Posterior vena cava (tissue), 2 donors: ENCODE measurements at regions of chr19 and their contacts with region 1.

Region 1: DNA sequence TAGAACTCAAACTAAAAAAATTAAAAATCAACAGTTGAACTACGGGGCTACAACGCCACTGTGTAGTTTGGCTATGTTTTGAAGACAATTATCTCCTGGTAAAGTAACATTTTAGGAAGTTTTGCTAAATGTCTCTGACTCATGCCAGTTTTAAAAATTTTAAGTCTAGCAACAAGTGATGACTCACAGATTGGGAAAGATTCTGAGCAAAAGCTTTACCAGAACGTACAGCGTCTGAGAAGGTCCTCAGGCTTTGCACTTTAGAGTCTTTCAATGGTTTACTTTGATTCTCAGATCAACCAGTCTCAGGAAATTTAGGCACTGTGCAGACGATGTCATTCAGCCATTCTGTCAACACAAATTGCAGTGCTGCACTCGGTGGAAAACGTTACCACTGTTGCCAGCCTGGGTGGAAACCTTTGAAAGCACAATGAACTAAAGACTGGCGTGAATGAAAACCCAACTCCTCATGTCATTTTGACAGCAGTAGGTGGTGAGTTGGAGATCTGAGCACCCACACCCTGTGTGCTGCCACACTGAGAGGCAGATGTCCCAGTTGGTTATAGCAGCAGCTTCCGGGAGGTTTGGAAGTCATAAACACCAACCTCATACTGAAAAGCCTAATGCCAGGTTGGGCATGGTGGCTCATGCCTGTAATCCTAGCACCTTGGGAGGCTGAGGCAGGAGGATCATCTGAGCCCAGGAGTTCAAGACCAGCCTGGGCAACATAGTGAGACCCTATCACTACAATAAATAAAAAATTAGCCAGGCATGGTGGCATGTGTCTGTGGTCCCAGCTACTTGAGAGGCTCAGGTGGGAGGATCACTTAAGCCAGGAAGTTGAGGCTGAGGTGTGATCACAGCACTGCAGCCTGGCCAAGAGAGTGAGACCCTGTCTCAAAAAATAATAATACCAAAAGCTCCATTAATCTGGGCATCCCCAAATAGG is 6.3 kb upstream of the WTIP start:
- DNase-seq: no peak

Region 2: DNA sequence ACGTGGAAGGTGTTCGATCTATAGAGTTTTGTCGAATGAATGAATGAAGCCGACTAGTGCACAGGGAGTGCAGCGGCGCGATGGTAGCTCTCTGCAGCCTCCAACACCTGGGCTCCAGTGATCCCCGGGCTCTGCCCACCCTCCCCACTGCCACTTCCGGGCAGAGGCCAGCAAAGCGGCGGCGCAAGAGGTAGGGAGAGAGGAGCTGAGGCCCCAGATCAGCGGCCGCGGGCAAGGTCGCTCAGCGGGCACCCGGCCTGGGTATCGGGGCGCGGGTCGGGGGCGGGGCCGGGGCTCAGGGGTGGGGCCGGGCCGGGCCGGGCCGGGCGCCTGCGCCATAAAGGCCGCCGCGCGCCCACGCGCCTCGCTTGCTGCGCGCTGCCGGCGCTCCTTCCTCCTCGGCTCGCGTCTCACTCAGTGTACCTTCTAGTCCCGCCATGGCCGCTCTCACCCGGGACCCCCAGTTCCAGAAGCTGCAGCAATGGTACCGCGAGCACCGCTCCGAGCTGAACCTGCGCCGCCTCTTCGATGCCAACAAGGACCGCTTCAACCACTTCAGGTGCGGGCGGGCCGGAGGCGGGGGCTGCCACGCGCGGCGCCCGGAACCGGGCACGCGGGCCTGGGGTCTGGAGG is 110.4 kb before region 1 on chr19 and contains the start of gene GPI:
- intact Hi-C with region 1: loop called in 1 of 2 experiments (anchors 5 kb)
- DNase-seq: peak; percentile 86
- total RNA-seq, gene GPI: 176 to 206 TPM